CD4-positive, alpha-beta T cell (primary cell): ENCODE measurements at regions of chr6 and their contacts with region 1.

Region 1: DNA sequence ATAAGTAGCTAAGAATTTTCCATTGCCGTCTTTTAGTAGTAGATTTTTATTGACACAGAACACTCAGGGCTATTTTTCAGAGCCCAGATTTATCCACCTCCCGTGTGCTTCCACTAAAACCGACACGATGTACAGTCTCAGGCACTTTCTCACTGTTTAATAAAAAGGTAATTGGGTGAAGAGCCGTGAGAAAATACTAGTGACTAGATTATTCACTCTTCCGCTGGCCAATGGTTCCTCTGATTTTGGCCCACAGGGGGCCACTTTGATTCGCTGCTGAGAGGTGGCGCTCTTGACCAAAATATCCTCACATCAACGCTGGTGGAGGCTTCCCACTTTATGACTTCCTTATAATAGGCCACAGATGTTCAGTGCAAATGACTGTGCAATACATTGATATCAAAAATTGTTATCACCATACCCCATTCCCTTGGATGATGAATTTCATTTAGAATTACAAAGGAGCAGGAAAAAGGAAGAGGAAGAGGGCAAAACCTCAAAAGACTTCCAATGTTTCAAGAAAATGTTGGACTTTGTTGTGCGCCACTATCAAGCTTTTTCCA is 12.3 kb upstream of the HDDC2 start:
- DNase-seq: peak in 8 of 14 experiments; percentile 11 to 66 (median 38)
- ATAC-seq: no peak
- H3K4me3 ChIP-seq: no peak overlapping the region
- H3K4me3 Mint-ChIP-seq: no peak overlapping the region
- H3K27ac ChIP-seq: no peak overlapping the region
- H3K27ac Mint-ChIP-seq: no peak overlapping the region
- H3K4me1 ChIP-seq: no peaks in the 10 kb centered on the region
- H3K4me1 Mint-ChIP-seq: peaks cover 3% of the 10 kb centered on the region
- H3K27me3 ChIP-seq: peaks cover 0 to 12% of the 10 kb centered on the region in 2 experiments
- H3K27me3 Mint-ChIP-seq: peaks cover 16% of the 10 kb centered on the region
- CTCF ChIP-seq: peak; percentile 53

Region 2: GRCh38 chr6:125749173-125749864 is 435.2 kb after region 1 on chr6 and contains the start of gene HEY2:
- CTCF ChIA-PET with region 1: interaction called, 4 read pairs
- POLR2A ChIA-PET with region 1: interaction called, 6 read pairs
- intact Hi-C with region 1: loop called (anchors 1 kb)
- DNase-seq: peak; percentile 55 to 92 (median 76)
- ATAC-seq: peak; percentile 63
- H3K4me3 ChIP-seq: peak within 1 kb of the TSS; percentile 67
- H3K4me3 Mint-ChIP-seq: peak within 1 kb of the TSS; percentile 93
- H3K27ac ChIP-seq: no peak within 1 kb of the TSS
- H3K27ac Mint-ChIP-seq: peak within 1 kb of the TSS; percentile 43
- H3K4me1 ChIP-seq: peaks cover 38% of the 10 kb centered on the region
- H3K4me1 Mint-ChIP-seq: peaks cover 38% of the 10 kb centered on the region
- H3K27me3 ChIP-seq: peaks cover 44 to 58% of the 10 kb centered on the region in 2 experiments
- H3K27me3 Mint-ChIP-seq: peaks cover 85% of the 10 kb centered on the region
- CTCF ChIP-seq: peak; percentile 16
- total RNA-seq, gene HEY2: 0.08 to 0.30 TPM

Region 3: GRCh38 chr6:125773387-125774341 is 459.6 kb after region 1 on chr6:
- CTCF ChIA-PET with region 1: no interaction called
- POLR2A ChIA-PET with region 1: no interaction called
- intact Hi-C with region 1: loop called (anchors 1 kb)
- DNase-seq: no peak
- ATAC-seq: no peak
- H3K4me3 ChIP-seq: no peak overlapping the region
- H3K4me3 Mint-ChIP-seq: no peak overlapping the region
- H3K27ac ChIP-seq: no peak overlapping the region
- H3K27ac Mint-ChIP-seq: no peak overlapping the region
- H3K4me1 ChIP-seq: no peaks in the 10 kb centered on the region
- H3K4me1 Mint-ChIP-seq: peaks cover 7% of the 10 kb centered on the region
- H3K27me3 ChIP-seq: no peaks in the 10 kb centered on the region
- H3K27me3 Mint-ChIP-seq: peaks cover 4% of the 10 kb centered on the region
- CTCF ChIP-seq: no peak

Region 4: GRCh38 chr6:125974214-125974866 is 660.2 kb after region 1 on chr6:
- CTCF ChIA-PET with region 1: interaction called, 5 read pairs
- POLR2A ChIA-PET with region 1: no interaction called
- intact Hi-C with region 1: loop called (anchors 1 kb)
- DNase-seq: peak in 3 of 14 experiments; percentile 63 to 67 (median 65)
- ATAC-seq: peak; percentile 84
- H3K4me3 ChIP-seq: no peak overlapping the region
- H3K4me3 Mint-ChIP-seq: no peak overlapping the region
- H3K27ac ChIP-seq: no peak overlapping the region
- H3K27ac Mint-ChIP-seq: no peak overlapping the region
- H3K4me1 ChIP-seq: no peaks in the 10 kb centered on the region
- H3K4me1 Mint-ChIP-seq: peaks cover 16% of the 10 kb centered on the region
- H3K27me3 ChIP-seq: no peaks in the 10 kb centered on the region
- H3K27me3 Mint-ChIP-seq: no peaks in the 10 kb centered on the region
- CTCF ChIP-seq: peak; percentile 67

Region 5: GRCh38 chr6:127120787-127121636 is 1806.9 kb after region 1 on chr6:
- CTCF ChIA-PET with region 1: no interaction called
- POLR2A ChIA-PET with region 1: no interaction called
- intact Hi-C with region 1: loop called in 1 of 2 experiments (anchors 5 kb)
- DNase-seq: peak; percentile 17 to 67 (median 42)
- ATAC-seq: peak; percentile 64
- H3K4me3 ChIP-seq: no peak overlapping the region
- H3K4me3 Mint-ChIP-seq: peak overlapping the region; percentile 6
- H3K27ac ChIP-seq: no peak overlapping the region
- H3K27ac Mint-ChIP-seq: no peak overlapping the region
- H3K4me1 ChIP-seq: peaks cover 30% of the 10 kb centered on the region
- H3K4me1 Mint-ChIP-seq: peaks cover 30% of the 10 kb centered on the region
- H3K27me3 ChIP-seq: peaks cover 35 to 68% of the 10 kb centered on the region in 2 experiments
- H3K27me3 Mint-ChIP-seq: peaks cover 71% of the 10 kb centered on the region
- CTCF ChIP-seq: peak; percentile 51

Region 6: DNA sequence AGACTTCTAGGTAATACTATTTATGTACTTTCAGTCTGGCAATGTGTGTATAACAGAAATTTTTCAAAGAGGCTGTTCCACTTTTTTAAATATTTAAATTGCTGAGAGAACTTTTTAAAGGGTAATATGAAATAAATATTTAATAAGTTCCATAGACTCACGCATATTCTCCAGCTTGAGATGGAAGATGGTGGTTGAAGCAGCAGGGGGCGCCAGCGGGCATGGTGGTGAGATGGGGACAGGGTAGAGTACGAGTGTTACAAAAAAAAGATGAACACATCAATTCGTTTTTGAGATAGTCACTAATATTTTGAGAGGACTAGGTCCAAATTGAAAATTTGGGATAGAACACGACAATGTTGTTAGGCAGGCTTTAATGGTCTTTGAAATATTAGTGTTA is 1872.8 kb after region 1 on chr6:
- CTCF ChIA-PET with region 1: no interaction called
- POLR2A ChIA-PET with region 1: no interaction called
- intact Hi-C with region 1: loop called in 1 of 2 experiments (anchors 5 kb)
- DNase-seq: peak; percentile 14 to 55 (median 36)
- ATAC-seq: no peak
- H3K4me3 ChIP-seq: no peak overlapping the region
- H3K4me3 Mint-ChIP-seq: no peak overlapping the region
- H3K27ac ChIP-seq: no peak overlapping the region
- H3K27ac Mint-ChIP-seq: no peak overlapping the region
- H3K4me1 ChIP-seq: no peaks in the 10 kb centered on the region
- H3K4me1 Mint-ChIP-seq: no peaks in the 10 kb centered on the region
- H3K27me3 ChIP-seq: no peaks in the 10 kb centered on the region
- H3K27me3 Mint-ChIP-seq: peaks cover 6% of the 10 kb centered on the region
- CTCF ChIP-seq: peak; percentile 49